Heart right ventricle (tissue), 16 donors: ENCODE measurements at regions of chr15 and their contacts with region 1.

Region 1: DNA sequence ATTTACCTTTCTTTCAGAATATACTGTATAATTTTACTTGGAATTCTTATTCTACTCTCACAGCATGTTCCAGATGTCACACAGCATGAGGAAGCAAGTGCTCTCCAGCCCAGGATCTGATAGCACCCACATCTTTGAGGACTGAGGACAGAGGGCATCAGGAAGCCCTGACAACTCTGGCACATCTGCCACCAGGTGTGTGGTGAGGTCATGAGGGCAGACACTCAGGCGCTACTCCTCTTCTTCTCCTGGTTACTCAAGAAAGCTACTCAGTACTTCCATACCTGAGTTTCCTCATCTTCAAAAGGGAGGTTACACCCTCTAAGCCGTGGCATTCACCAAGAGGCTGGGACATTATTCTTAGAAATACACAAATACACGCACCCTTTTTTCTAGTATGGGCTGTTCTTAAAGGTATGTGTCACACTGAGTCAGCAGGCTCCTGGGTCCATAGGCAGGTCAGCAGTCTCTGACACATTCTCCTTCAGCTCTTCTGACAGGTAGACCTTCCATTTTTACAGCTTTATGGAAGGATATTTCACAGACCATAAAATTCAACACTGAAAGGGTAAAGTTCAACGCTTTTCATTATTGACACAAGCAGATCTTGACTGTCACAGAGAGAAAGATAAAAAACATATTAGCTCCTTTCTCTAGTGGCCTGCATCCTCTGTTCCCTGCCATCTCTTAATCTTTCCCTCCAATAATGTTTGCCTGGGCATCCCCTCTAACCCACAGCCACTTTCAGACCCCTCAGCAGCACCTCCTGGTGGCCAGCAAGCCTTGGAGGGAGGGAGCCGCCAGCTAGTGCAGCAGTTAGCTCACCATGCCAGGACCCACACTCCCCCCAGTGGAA is 103.2 kb upstream of the TJP1 start:
- DNase-seq: peak; percentile 81 to 85
- ATAC-seq: peak; percentile 90 to 98 (median 95)
- H3K4me3 ChIP-seq: no peak overlapping the region
- H3K27ac ChIP-seq: peak overlapping the region in 6 of 10 donors; percentile 3 to 66 (median 30)
- H3K4me1 ChIP-seq: peaks cover 8 to 25% (median 17%) of the 10 kb centered on the region in 9 donors
- H3K27me3 ChIP-seq: no peaks in the 10 kb centered on the region
- CTCF ChIP-seq: peak; percentile 82 to 98 (median 90)

Region 2: GRCh38 chr15:29698030-29698701 is 227.3 kb before region 1 on chr15:
- intact Hi-C with region 1: loop called in 1 of 10 experiments (anchors 10 kb)
- DNase-seq: no peak
- ATAC-seq: peak in 3 of 8 donors; percentile 14 to 47 (median 46)
- H3K4me3 ChIP-seq: no peak overlapping the region
- H3K27ac ChIP-seq: no peak overlapping the region
- H3K4me1 ChIP-seq: no peaks in the 10 kb centered on the region
- H3K27me3 ChIP-seq: no peaks in the 10 kb centered on the region
- CTCF ChIP-seq: no peak

Region 3: GRCh38 chr15:29815000-29815710 is 110.3 kb before region 1 on chr15:
- intact Hi-C with region 1: loop called in 6 of 10 experiments (anchors 5 kb)
- DNase-seq: no peak
- ATAC-seq: peak in 7 of 8 donors; percentile 56 to 87 (median 75)
- H3K4me3 ChIP-seq: no peak overlapping the region
- H3K27ac ChIP-seq: peak overlapping the region in 2 of 10 donors; percentile 9 to 49
- H3K4me1 ChIP-seq: peaks cover 16 to 95% (median 70%) of the 10 kb centered on the region in 9 donors
- H3K27me3 ChIP-seq: peaks cover 0 to 38% (median 0%) of the 10 kb centered on the region in 7 donors
- CTCF ChIP-seq: no peak

Region 4: GRCh38 chr15:29870495-29871151 is 54.8 kb before region 1 on chr15:
- intact Hi-C with region 1: loop called in 2 of 10 experiments (anchors 2 to 10 kb)
- DNase-seq: peak; percentile 44 to 61
- ATAC-seq: peak; percentile 64 to 86 (median 80)
- H3K4me3 ChIP-seq: peak overlapping the region in 3 of 10 donors; percentile 23 to 32 (median 26)
- H3K27ac ChIP-seq: peak overlapping the region; percentile 55 to 91 (median 76)
- H3K4me1 ChIP-seq: peaks cover 6 to 67% (median 30%) of the 10 kb centered on the region in 9 donors
- H3K27me3 ChIP-seq: no peaks in the 10 kb centered on the region
- CTCF ChIP-seq: no peak